Cardiac septum (tissue), 1 donor: ENCODE measurements at regions of chr20 and their contacts with region 1.

Region 1: GRCh38 chr20:10667077-10667401 is 6.8 kb downstream of the JAG1 start:
- DNase-seq: no peak

Region 2: DNA sequence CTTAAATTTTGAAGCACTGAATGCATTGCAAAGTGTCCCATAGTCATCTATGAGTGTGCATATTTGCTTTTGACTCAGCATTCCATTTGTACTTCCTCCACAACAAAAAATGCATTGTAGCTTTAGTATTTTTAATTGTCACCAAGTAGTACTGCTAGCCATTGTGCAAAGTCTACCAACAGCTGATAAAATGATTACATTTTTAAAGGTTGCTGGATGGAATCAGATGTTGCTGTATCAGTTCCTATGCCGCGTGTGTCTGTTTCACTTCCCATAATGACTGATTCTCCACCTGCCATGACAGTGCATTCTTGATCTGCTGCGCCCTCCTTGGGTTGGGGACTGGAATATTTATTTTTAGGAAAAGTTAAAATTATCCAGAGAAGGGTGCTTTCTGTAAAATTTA is 190.7 kb before region 1 on chr20:
- intact Hi-C with region 1: loop called (anchors 10 kb)
- DNase-seq: no peak

Region 3: DNA sequence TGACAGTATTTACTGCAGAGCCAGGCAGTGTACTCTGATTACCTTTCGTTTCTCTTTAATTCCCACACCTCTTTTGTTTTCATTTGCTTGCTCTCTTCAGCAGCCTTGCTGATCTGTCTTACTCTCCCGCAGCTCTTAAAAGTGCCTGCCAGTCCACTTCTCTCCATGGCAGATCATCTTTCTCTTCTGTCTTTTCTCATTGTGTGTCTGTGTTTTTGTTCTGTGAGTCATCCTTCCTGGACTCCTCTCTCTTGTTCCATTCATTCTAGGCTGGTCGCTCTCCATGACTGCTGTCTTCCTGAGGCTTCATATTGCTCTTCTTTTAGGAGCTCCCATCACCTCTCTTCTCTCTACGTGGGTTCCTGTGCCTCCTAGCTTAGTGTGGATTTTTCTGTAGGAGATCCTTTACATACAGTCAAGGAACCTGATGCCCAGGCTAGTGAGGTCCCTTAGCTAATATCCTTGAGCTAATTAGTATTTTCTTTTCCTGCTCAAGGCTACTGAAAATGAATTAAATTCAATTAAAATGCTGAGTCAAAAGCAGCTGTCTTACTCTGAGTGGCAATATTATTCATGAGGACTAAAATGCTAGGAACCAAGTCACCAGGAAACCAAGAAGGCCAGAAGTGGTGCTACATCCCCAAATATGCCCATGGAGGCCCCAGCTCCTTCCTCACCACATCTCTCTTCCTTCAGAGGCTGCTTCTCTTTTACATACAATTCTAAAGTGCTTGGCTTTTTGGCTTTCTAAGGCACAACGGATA is 145.8 kb before region 1 on chr20:
- intact Hi-C with region 1: no loop called
- DNase-seq: no peak